Left colon (tissue), 2 donors: ENCODE measurements at regions of chr4 and their contacts with region 1.

Region 1: GRCh38 chr4:139229534-139230039 is 50.4 kb downstream of the MGARP start:
- DNase-seq: no peak
- ATAC-seq: peak; percentile 60

Region 2: GRCh38 chr4:139279760-139280620 is 50.4 kb after region 1 on chr4 and contains the start of gene MGARP:
- intact Hi-C with region 1: loop called in 1 of 2 experiments (anchors 10 kb)
- DNase-seq: peak in 1 of 2 donors; percentile 13
- ATAC-seq: peak; percentile 41
- total RNA-seq, gene MGARP: 0.22 TPM in 1 of 2 donors, not detected in the other